Right cardiac atrium (tissue), 5 donors: ENCODE measurements at regions of chr12 and their contacts with region 1.

Region 1: DNA sequence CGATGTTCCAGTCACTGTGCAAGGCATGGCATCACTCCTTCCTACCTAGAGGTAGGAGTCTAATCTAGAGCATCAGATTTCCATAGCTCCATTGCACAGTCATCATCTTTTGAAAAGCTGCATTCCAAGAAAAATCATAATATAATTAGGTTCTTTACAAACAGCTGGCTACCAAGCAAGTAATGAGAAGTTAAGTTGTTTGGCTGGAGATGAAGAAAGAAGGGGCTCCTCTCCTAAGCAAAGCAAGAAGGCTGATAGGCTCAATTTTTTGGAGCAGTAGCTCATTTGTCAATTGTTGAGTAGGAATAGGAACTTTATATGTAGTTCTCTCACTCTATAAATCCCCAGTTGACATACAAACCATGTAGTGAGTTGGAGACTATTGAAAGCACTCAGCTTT is 8.3 kb downstream of the FOXJ2 start:
- DNase-seq: no peak
- ATAC-seq: no peak
- H3K4me3 ChIP-seq: no peak overlapping the region
- H3K27ac ChIP-seq: no peak overlapping the region
- H3K4me1 ChIP-seq: peaks cover 21% of the 10 kb centered on the region
- H3K27me3 ChIP-seq: no peaks in the 10 kb centered on the region

Region 2: DNA sequence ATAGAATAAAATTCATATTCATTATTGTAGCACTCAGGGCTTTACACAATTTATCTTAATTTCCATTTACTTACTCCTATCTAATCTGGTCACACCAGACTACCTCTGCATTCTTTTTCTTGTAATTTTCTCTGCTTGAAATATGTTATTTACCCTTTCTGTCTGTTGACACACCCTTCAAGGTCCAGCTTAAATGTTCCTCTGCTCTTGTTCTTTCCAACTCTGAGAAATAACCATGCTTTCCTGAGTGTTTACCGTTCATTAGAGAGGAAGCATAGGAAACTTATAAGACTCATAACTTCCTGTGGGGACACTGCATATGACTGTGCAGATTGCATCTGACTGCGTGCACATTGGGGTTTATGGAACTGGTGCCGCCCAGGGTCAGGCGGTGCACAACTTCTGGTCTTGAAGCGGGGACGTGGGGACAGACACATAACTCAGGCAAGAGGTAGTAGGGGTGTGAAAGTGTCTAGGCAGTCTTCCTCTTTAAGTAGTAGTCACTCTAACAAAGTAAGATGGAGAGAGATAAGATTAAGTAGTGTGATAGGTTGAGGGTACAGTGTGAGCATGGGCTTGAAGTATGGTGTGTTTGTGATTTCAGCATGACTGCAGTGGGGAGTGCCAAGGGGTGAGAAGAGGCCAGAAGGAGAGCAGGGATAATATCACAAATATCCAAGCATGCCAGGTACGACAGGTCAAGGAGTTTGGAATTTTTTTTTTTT is 50.8 kb before region 1 on chr12:
- intact Hi-C with region 1: no loop called
- DNase-seq: peak in 2 of 3 donors; percentile 61 to 62
- ATAC-seq: peak; percentile 48 to 68
- H3K4me3 ChIP-seq: no peak overlapping the region
- H3K27ac ChIP-seq: no peak overlapping the region
- H3K4me1 ChIP-seq: no peaks in the 10 kb centered on the region
- H3K27me3 ChIP-seq: no peaks in the 10 kb centered on the region

Region 3: GRCh38 chr12:8081251-8081920 is 40.6 kb after region 1 on chr12:
- intact Hi-C with region 1: loop called in 1 of 4 experiments (anchors 5 kb)
- DNase-seq: no peak
- ATAC-seq: peak; percentile 26 to 31
- H3K4me3 ChIP-seq: peak overlapping the region; percentile 68
- H3K27ac ChIP-seq: peak overlapping the region; percentile 90
- H3K4me1 ChIP-seq: no peaks in the 10 kb centered on the region
- H3K27me3 ChIP-seq: no peaks in the 10 kb centered on the region